ENCODE measurements at regions of chr12 and their contacts with region 1.

Region 1: GRCh38 chr12:94545935-94546771 is 86.5 kb upstream of the CEP83 start:
- DNase-seq: peak; percentile 30 to 48 (median 40)
- H3K4me3 ChIP-seq: no peak overlapping the region
- H3K27ac ChIP-seq: no peak overlapping the region
- H3K4me1 ChIP-seq: no peaks in the 10 kb centered on the region
- H3K27me3 ChIP-seq: no peaks in the 10 kb centered on the region
- CTCF ChIP-seq: peak; percentile 19 to 59 (median 35)
- EP300 ChIP-seq: no peak
- POLR2A ChIP-seq: no peak

Region 2: DNA sequence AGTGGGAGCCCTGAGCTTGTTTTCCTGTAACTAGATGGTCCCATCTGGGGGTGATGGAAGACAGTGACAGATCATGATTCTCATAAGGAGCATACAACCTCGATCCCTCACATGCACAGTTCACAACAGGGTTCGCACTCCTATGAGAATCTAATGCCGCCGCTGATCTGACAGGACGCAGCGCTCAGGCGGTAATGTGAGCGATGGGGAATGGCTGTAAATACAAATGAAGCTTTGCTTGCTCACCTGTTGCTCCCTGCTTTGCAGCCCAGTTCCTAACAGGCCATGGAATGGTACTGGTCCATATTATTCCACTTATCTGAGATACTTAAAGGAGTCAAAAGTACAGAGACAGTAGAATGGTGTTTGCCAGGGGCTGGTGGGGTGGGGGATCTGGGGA is 76.6 kb before region 1 on chr12:
- intact Hi-C with region 1: no loop called
- DNase-seq: no peak
- H3K4me3 ChIP-seq: no peak overlapping the region
- H3K27ac ChIP-seq: no peak overlapping the region
- H3K4me1 ChIP-seq: no peaks in the 10 kb centered on the region
- H3K27me3 ChIP-seq: no peaks in the 10 kb centered on the region
- CTCF ChIP-seq: no peak
- EP300 ChIP-seq: no peak
- POLR2A ChIP-seq: no peak

Region 3: GRCh38 chr12:94753036-94753679 is 207.0 kb after region 1 on chr12:
- intact Hi-C with region 1: loop called in 2 of 4 experiments (anchors 10 kb)
- DNase-seq: peak in 3 of 5 donors; percentile 30 to 42 (median 40)
- H3K4me3 ChIP-seq: no peak overlapping the region
- H3K27ac ChIP-seq: no peak overlapping the region
- H3K4me1 ChIP-seq: peaks cover 10% of the 10 kb centered on the region
- H3K27me3 ChIP-seq: no peaks in the 10 kb centered on the region
- CTCF ChIP-seq: no peak
- EP300 ChIP-seq: no peak
- POLR2A ChIP-seq: no peak

Region 4: DNA sequence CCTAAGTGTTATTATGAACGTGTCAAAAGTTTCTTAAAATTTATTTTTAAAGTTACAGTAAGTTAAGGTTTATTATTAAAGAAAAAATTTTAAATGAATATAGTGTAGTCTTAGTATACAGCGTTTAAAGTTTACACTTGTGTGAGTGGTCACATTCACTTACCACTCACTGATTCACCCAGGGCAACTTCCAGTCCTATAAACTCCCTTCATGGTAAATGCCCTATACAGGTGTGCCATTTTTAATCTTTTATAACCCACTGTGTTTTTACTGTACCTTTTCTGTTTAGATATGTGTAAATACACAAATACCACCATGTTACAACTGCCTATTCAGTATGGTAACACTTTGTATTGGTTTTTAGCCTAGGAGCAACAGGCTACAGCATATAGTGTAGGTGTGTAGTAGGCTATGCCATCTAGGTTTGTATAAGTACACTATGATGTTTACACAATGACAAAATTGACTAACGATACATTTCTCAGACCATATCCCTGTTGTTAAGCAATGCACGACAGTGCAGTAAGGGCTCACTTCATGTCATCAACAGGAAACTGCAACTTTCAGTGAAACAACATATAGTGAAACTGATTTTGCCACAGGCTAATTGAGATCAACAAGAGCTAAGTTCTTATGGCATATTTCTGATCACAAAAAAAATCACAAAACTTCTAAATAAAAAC is 216.2 kb after region 1 on chr12:
- intact Hi-C with region 1: loop called (anchors 10 kb)
- DNase-seq: no peak
- H3K4me3 ChIP-seq: no peak overlapping the region
- H3K27ac ChIP-seq: no peak overlapping the region
- H3K4me1 ChIP-seq: peaks cover 3% of the 10 kb centered on the region
- H3K27me3 ChIP-seq: no peaks in the 10 kb centered on the region
- CTCF ChIP-seq: no peak
- EP300 ChIP-seq: no peak
- POLR2A ChIP-seq: no peak